Sigmoid colon (tissue), 7 donors: ENCODE measurements at regions of chr9 and their contacts with region 1.

Region 1: GRCh38 chr9:114250235-114250568 is 72.7 kb upstream of the ORM1 start:
- DNase-seq: peak; percentile 93
- H3K4me3 ChIP-seq: peak overlapping the region in 3 of 4 donors; percentile 15 to 24 (median 18)
- H3K27ac ChIP-seq: peak overlapping the region; percentile 65 to 79 (median 74)
- H3K4me1 ChIP-seq: peaks cover 0 to 35% (median 32%) of the 10 kb centered on the region in 4 donors
- H3K27me3 ChIP-seq: no peaks in the 10 kb centered on the region
- CTCF ChIP-seq: no peak
- EP300 ChIP-seq: no peak
- POLR2A ChIP-seq: no peak

Region 2: DNA sequence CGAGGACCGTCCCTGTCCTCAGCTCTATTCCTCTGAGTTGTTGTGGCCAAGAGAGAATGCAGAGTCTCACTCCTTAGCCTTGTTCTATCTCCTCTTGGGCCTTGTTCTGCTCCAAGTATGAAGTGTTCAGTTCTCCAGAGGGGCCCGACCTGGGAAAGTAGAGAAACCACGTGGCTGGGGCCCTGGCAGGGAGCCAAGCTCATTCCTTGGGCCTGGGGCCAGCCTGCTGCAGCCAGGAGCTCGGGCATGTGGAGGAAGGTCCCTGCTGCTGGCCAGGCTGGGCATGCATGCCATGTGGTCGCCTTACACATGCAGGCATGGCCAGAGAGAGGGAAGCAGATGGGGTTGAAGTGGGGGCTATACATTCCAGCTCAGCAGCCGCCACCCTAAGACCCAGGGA is 34.1 kb before region 1 on chr9:
- intact Hi-C with region 1: loop called (anchors 5 kb)
- DNase-seq: no peak
- H3K4me3 ChIP-seq: no peak overlapping the region
- H3K27ac ChIP-seq: peak overlapping the region in 2 of 4 donors; percentile 20 to 52
- H3K4me1 ChIP-seq: peaks cover 0 to 34% (median 25%) of the 10 kb centered on the region in 4 donors
- H3K27me3 ChIP-seq: no peaks in the 10 kb centered on the region
- CTCF ChIP-seq: no peak
- EP300 ChIP-seq: no peak
- POLR2A ChIP-seq: no peak